ENCODE measurements at regions of chr10 and their contacts with region 1.

Region 1: DNA sequence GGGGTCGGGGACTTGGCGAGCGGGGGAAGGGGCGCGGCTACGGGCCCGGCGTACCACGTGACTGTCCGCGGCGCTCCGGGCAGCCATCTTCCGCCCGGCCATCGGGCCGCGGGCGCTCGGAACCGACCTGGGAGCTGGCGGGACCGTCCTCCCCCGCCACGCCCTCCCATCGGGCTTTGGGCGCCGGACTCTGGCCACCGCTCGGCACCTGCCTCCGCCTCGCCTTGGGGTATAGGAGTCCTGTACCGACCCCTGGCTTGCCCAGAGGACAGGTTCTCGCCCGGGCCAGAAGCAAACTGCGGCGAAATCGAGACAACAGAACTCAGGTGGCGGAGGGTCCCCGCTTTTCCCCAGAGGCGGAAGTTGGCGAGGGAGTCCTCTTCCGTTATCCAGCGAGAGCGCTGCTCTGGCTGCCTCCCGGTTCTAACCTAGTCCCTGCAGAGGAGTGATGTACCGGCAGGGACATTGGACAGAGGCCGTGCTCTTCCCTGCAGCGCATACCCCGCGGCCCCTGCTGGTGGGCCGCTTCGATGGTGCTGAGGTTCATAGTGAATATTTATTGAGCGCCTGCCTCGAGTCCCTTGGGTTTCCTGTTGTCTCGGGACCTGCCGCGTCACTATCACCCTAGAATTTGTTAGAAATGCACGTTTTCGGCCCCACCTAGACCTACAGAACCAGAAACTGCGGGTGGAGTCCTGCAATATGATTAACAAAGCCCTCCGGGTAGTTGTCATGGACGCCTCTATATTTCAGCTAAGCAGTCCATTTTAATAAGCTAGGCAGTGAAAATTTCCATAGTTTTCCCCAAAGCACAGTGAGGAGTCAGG is 1.3 kb upstream of the SGMS1 start:
- DNase-seq: peak; percentile 74
- H3K4me3 ChIP-seq: peak overlapping the region; percentile 80 to 81
- H3K27ac ChIP-seq: peak overlapping the region; percentile 99
- H3K4me1 ChIP-seq: peaks cover 7% of the 10 kb centered on the region
- H3K27me3 ChIP-seq: no peaks in the 10 kb centered on the region
- CTCF ChIP-seq: peak; percentile 38 to 76 (median 64)
- POLR2A ChIP-seq: no peak

Region 2: DNA sequence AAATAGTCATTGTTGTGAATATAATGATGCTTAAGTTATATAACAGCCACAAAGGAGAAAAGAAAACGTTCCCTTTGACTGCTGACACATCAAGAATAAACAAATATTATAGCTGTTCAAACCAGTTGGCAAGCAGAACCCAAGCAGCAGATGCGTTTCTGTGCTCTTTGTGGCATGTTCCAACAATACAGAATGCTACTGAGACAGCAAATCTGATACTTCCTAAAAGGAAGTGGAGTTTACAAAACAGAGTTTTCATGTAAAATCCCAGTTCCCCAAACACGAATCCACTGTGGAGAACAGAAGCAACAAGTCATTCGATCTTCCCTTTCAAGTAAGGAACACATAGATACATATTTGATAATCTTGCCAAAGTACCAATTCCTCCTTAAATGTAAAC is 202.8 kb before region 1 on chr10:
- intact Hi-C with region 1: loop called (anchors 2 kb)
- DNase-seq: no peak
- H3K4me3 ChIP-seq: no peak overlapping the region
- H3K27ac ChIP-seq: no peak overlapping the region
- H3K4me1 ChIP-seq: no peaks in the 10 kb centered on the region
- H3K27me3 ChIP-seq: no peaks in the 10 kb centered on the region
- CTCF ChIP-seq: no peak
- POLR2A ChIP-seq: no peak

Region 3: GRCh38 chr10:50561816-50562215 is 63.3 kb before region 1 on chr10:
- intact Hi-C with region 1: loop called (anchors 5 kb)
- DNase-seq: no peak
- H3K4me3 ChIP-seq: no peak overlapping the region
- H3K27ac ChIP-seq: peak overlapping the region; percentile 28 to 51
- H3K4me1 ChIP-seq: no peaks in the 10 kb centered on the region
- H3K27me3 ChIP-seq: no peaks in the 10 kb centered on the region
- CTCF ChIP-seq: peak; percentile 35 to 69 (median 67)
- POLR2A ChIP-seq: no peak

Measured in prostate gland (tissue), 2 donors.